HepG2 (cell line): ENCODE measurements at regions of chr10 and their contacts with region 1.

Region 1: GRCh38 chr10:128631801-128632241 is 505.6 kb upstream of the MKI67 start:
- DNase-seq: peak; percentile 21
- ATAC-seq: no peak
- H3K4me3 ChIP-seq: no peak overlapping the region
- H3K27ac ChIP-seq: no peak overlapping the region
- H3K4me1 ChIP-seq: no peaks in the 10 kb centered on the region
- H3K27me3 ChIP-seq: peaks cover 0 to 7% of the 10 kb centered on the region in 2 experiments; a peak in 4 of 5 replicates
- CTCF ChIP-seq: 0 out of 2 replicates have a peak, but pooled peaks have one; percentile 19
- EP300 ChIP-seq: no peak
- POLR2A ChIP-seq: no peak
- RAD21 ChIP-seq: no peak

Region 2: GRCh38 chr10:128859738-128860386 is 228.0 kb after region 1 on chr10:
- CTCF ChIA-PET with region 1: no interaction called
- POLR2A ChIA-PET with region 1: no interaction called
- in situ Hi-C with region 1: no loop called
- intact Hi-C with region 1: loop called (anchors 5 kb)
- DNase-seq: peak; percentile 24
- ATAC-seq: no peak
- H3K4me3 ChIP-seq: no peak overlapping the region
- H3K27ac ChIP-seq: no peak overlapping the region
- H3K4me1 ChIP-seq: peaks cover 13% of the 10 kb centered on the region
- H3K27me3 ChIP-seq: peaks cover 0 to 3% of the 10 kb centered on the region in 2 experiments; a peak in 1 of 5 replicates
- CTCF ChIP-seq: peak; percentile 54
- EP300 ChIP-seq: no peak
- POLR2A ChIP-seq: no peak
- RAD21 ChIP-seq: no peak